Panc1 (cell line): ENCODE measurements at regions of chr6 and their contacts with region 1.

Region 1: GRCh38 chr6:135630789-135631376 is 133.3 kb upstream of the AHI1 start:
- DNase-seq: no peak
- ATAC-seq: no peak
- H3K4me3 ChIP-seq: no peak overlapping the region
- H3K27ac ChIP-seq: no peak overlapping the region
- H3K4me1 ChIP-seq: no peaks in the 10 kb centered on the region
- H3K27me3 ChIP-seq: no peaks in the 10 kb centered on the region
- CTCF ChIP-seq: no peak

Region 2: GRCh38 chr6:136262940-136263339 is 632.1 kb after region 1 on chr6:
- CTCF ChIA-PET with region 1: no interaction called
- POLR2A ChIA-PET with region 1: interaction called, 10 read pairs
- in situ Hi-C with region 1: no loop called
- intact Hi-C with region 1: no loop called
- DNase-seq: no peak
- ATAC-seq: no peak
- H3K4me3 ChIP-seq: no peak overlapping the region
- H3K27ac ChIP-seq: no peak overlapping the region
- H3K4me1 ChIP-seq: no peaks in the 10 kb centered on the region
- H3K27me3 ChIP-seq: no peaks in the 10 kb centered on the region
- CTCF ChIP-seq: no peak